ENCODE measurements at regions of chr20 and their contacts with region 1.

Region 1: GRCh38 chr20:815914-816606 is 17.5 kb upstream of the FAM110A start:
- DNase-seq: peak; percentile 76
- H3K4me3 Mint-ChIP-seq: no peak overlapping the region
- H3K27ac Mint-ChIP-seq: no peak overlapping the region
- H3K4me1 Mint-ChIP-seq: peaks cover 3% of the 10 kb centered on the region
- H3K27me3 Mint-ChIP-seq: peaks cover 8% of the 10 kb centered on the region

Region 2: DNA sequence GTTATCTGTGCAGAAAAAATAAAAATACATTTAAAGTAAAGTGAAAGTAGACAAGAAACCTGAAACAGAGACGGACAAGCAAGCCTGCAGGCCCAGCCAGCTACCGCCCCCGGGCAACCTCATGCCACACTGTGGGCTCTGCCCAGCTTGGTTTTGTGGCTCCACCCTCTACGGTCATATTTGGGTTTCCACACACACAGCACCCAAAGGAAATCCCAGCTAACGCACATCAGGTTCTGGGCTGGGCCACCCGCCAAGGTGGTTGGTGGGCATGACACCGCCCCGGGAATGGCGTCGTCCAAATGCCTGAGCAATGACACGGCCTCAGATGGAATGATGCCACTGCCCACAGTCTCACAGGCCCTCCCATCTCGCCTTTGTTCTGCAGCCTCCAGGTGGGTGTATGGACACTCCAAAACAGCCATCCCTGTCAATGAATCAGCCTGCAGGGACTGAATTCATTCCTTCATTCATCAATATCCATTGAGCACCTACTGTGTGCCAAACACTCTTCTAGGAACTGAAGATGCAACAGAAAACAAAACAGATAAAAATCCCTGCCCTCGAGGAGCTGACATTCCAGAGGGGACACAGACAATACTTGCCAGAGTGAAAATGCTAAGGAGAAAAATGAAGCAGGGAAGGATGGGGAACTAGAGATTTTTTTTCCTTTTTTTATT is 40.4 kb after region 1 on chr20:
- CTCF ChIA-PET with region 1: interaction called, 11 read pairs
- intact Hi-C with region 1: no loop called
- DNase-seq: peak; percentile 64
- H3K4me3 Mint-ChIP-seq: no peak overlapping the region
- H3K27ac Mint-ChIP-seq: no peak overlapping the region
- H3K4me1 Mint-ChIP-seq: peaks cover 58% of the 10 kb centered on the region
- H3K27me3 Mint-ChIP-seq: no peaks in the 10 kb centered on the region

Region 3: DNA sequence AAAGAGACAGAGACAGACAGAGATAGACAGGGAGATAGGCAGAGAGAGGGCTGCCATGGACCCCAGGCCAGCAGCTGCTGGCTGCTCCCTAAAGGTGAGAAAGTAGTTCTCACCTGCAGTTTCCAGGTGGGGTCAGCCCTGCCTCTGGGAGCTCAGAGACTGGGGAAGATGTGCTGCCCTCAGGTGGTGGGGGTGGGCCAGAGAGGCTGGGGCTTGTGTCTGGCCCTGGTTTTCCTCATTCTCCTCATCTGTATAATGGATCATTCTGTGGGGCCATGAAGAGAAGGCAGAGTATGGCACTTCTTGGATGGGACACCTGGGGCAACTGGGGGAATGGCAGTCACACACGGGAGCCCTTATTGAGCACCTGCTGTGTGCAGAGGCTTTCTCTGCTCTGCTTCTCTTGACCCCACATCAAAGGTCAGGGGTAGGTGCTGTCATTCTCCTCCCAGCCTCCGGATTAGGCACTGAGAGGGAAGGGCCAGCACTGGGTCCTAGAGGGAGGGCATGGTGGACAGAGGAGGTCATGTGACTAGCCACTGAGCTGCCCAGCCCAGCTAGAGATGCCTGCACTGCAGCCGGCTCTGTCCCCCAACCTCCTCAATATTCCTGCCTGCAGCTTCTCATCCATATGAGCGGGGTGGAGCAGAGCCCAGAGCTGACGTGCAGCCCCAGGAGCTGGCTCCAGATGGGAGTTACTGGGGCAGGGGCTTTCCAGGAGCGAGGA is 96.0 kb after region 1 on chr20:
- CTCF ChIA-PET with region 1: interaction called, 3 read pairs
- intact Hi-C with region 1: loop called (anchors 2 kb)
- DNase-seq: peak; percentile 29
- H3K4me3 Mint-ChIP-seq: no peak overlapping the region
- H3K27ac Mint-ChIP-seq: no peak overlapping the region
- H3K4me1 Mint-ChIP-seq: no peaks in the 10 kb centered on the region
- H3K27me3 Mint-ChIP-seq: no peaks in the 10 kb centered on the region

Region 4: DNA sequence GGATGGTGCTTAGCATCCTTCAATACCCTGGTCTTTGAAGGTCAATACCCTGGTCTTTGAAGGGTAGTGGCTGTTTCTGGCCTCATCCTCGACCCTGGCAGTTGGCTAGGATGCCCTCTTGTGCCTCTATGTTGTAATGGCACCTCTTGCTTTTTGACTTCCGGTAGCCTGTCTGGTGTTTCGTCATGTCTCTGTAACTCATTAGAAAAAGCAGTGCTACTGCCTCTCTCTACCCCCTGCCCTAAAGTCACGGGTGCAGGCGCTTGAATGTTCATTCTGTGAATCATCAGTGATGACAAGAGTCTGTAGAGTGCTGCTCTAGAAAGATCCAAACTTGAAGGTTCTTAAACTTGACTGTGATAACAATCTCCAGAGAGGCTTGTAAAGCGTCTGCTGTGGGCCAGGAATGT is 157.7 kb after region 1 on chr20:
- CTCF ChIA-PET with region 1: interaction called, 5 read pairs
- intact Hi-C with region 1: loop called (anchors 1 kb)
- DNase-seq: peak; percentile 70
- H3K4me3 Mint-ChIP-seq: no peak overlapping the region
- H3K27ac Mint-ChIP-seq: no peak overlapping the region
- H3K4me1 Mint-ChIP-seq: peaks cover 3% of the 10 kb centered on the region
- H3K27me3 Mint-ChIP-seq: no peaks in the 10 kb centered on the region

Region 5: DNA sequence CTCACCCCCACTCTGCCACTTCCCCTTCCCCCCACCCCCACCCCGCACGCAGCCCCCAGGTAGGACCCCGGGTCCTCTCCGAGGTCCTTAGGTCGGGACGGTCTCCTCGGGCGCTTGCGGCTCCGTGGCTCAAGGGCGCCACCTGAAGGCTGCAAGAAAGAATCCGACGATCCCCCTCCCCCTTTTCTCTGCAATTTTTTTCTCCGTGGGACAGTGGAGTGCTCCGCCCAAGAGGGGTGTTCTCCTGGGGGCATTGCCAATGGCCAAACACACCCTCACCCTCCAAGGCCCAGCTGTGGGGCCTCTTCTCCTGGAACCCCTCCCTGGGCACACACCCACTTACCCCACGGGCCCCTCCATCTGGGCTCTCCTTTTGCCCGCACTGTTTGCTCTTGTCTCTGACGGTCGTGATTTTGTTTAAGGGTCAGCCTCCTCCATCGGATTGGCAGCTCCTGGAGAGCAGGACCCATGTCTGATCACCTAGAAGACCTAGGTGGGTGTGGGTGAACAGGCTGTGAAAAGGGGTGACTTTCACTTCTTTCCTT is 369.8 kb after region 1 on chr20:
- CTCF ChIA-PET with region 1: interaction called, 3 read pairs
- intact Hi-C with region 1: loop called (anchors 1 kb)
- DNase-seq: peak; percentile 68
- H3K4me3 Mint-ChIP-seq: peak overlapping the region; percentile 41
- H3K27ac Mint-ChIP-seq: no peak overlapping the region
- H3K4me1 Mint-ChIP-seq: peaks cover 6% of the 10 kb centered on the region
- H3K27me3 Mint-ChIP-seq: peaks cover 24% of the 10 kb centered on the region

Measured in activated naive CD4-positive, alpha-beta T cell treated with anti-CD3 and anti-CD28 coated beads for 36 hours (primary cell).